Activated CD4-positive, alpha-beta T cell treated with anti-CD3 and anti-CD28 coated beads for 36 hours (primary cell): ENCODE measurements at regions of chr11 and their contacts with region 1.

Region 1: GRCh38 chr11:62591448-62592145 is at the start of gene TUT1:
- DNase-seq: peak; percentile 97
- ATAC-seq: peak; percentile 93
- H3K4me3 Mint-ChIP-seq: peak within 1 kb of the TSS; percentile 99
- H3K27ac Mint-ChIP-seq: peak within 1 kb of the TSS; percentile 99
- H3K4me1 Mint-ChIP-seq: peaks cover 47% of the 10 kb centered on the region
- H3K27me3 Mint-ChIP-seq: no peaks in the 10 kb centered on the region
- total RNA-seq, gene TUT1: 32.5 to 36.0 TPM

Region 2: DNA sequence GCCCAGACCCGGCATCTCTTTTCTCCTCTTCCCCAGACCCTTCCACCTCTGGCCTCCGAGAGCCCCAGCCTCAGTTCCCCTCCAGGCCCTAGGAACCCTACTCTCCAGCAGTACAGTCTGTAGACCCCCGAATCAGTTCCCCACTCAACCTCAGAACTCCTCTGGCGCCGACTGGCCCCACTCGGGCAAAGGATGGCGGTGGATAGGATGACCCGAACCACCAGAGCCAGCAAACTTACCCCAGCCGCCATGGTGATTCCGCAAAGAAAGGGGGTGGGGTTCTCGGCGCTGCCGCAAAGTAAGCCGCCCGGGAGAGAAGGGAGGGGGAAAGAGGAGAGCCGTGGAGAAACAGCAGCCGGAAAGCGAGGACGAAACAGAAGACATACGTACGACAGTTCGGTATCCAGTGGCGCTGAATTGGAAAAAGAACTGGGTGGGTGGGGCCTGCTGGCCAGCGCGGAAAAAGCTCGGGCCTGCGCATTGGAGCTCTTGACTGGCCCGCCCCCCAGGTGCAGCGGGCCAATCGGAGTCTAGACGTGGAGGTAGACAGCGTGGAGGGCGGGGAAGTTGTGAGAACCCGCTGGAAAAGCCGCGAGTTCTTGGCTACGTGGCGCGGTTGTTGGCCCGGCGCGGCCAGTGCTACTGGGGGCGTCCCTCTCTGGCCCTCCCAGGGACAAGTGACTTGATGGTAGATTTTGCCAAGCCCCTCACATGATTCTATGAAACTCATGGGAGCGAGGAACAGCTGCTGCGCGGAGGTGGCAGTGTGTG is 17.8 kb before region 1 on chr11 and contains the start of gene EEF1G:
- CTCF ChIA-PET with region 1: interaction called, 13 read pairs
- POLR2A ChIA-PET with region 1: interaction called, 59 read pairs
- intact Hi-C with region 1: loop called (anchors 1 kb)
- DNase-seq: peak; percentile 99
- ATAC-seq: peak; percentile 97
- H3K4me3 Mint-ChIP-seq: peak within 1 kb of the TSS; percentile 93
- H3K27ac Mint-ChIP-seq: peak within 1 kb of the TSS; percentile 97
- H3K4me1 Mint-ChIP-seq: peaks cover 43% of the 10 kb centered on the region
- H3K27me3 Mint-ChIP-seq: no peaks in the 10 kb centered on the region
- total RNA-seq, gene EEF1G: 1,986 to 2,351 TPM

Region 3: GRCh38 chr11:62652161-62653006 is 60.8 kb after region 1 on chr11:
- CTCF ChIA-PET with region 1: interaction called, 4 read pairs
- POLR2A ChIA-PET with region 1: interaction called, 20 read pairs
- intact Hi-C with region 1: loop called (anchors 1 to 2 kb)
- DNase-seq: no peak
- ATAC-seq: no peak
- H3K4me3 Mint-ChIP-seq: peak overlapping the region; percentile 88
- H3K27ac Mint-ChIP-seq: peak overlapping the region; percentile 91
- H3K4me1 Mint-ChIP-seq: peaks cover 23% of the 10 kb centered on the region
- H3K27me3 Mint-ChIP-seq: no peaks in the 10 kb centered on the region

Region 4: GRCh38 chr11:62694455-62695167 is 103.0 kb after region 1 on chr11:
- CTCF ChIA-PET with region 1: interaction called, 10 read pairs
- POLR2A ChIA-PET with region 1: interaction called, 9 read pairs
- intact Hi-C with region 1: loop called (anchors 1 to 5 kb)
- DNase-seq: peak; percentile 86
- ATAC-seq: peak; percentile 95
- H3K4me3 Mint-ChIP-seq: no peak overlapping the region
- H3K27ac Mint-ChIP-seq: no peak overlapping the region
- H3K4me1 Mint-ChIP-seq: peaks cover 5% of the 10 kb centered on the region
- H3K27me3 Mint-ChIP-seq: no peaks in the 10 kb centered on the region

Region 5: GRCh38 chr11:62771144-62772021 is 179.8 kb after region 1 on chr11 and contains the start of gene TAF6L:
- CTCF ChIA-PET with region 1: no interaction called
- POLR2A ChIA-PET with region 1: interaction called, 3 read pairs
- intact Hi-C with region 1: loop called in 1 of 2 experiments (anchors 1 kb)
- DNase-seq: peak; percentile 98
- ATAC-seq: peak; percentile 87
- H3K4me3 Mint-ChIP-seq: peak within 1 kb of the TSS; percentile 85
- H3K27ac Mint-ChIP-seq: peak within 1 kb of the TSS; percentile 89
- H3K4me1 Mint-ChIP-seq: peaks cover 26% of the 10 kb centered on the region
- H3K27me3 Mint-ChIP-seq: no peaks in the 10 kb centered on the region
- total RNA-seq, gene TAF6L: 10.2 to 12.6 TPM

Region 6: DNA sequence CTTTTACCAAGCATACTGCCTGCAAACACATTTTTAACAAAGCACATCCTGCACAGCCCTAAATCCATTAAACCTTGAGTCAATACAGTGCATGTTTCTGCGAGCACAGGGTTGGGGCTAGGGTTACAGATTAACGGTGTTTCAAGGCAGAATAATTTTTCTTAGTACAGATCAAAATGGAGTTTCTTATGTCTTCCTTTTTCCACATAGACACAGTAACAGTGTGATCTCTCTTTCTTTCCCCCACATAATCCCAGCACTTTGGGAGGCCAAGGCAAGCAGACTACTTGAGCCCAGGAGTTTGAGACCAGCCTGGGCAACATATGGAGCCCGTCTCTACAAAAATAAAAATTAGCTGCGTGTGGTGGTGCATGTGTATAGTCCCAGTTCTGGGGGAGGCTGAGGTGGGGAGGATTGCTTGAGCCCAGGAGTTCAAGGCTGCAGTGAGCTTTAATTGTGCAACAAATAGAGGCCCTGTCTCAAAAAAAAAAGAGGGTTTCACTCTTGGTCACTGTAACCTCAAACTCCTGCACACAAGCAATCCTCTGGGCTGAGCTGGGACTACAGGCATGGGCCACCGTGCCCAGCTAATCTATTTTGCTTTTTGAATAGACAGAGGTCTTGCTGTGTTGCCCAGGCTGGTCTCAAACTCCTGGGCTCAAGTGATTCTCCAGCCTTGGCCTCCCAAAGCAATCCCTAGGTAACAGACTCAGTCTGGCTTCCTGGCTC is 269.4 kb after region 1 on chr11:
- CTCF ChIA-PET with region 1: interaction called, 3 read pairs
- POLR2A ChIA-PET with region 1: interaction called, 12 read pairs
- intact Hi-C with region 1: loop called in 1 of 2 experiments (anchors 5 kb)
- DNase-seq: no peak
- ATAC-seq: peak; percentile 28
- H3K4me3 Mint-ChIP-seq: no peak overlapping the region
- H3K27ac Mint-ChIP-seq: peak overlapping the region; percentile 69
- H3K4me1 Mint-ChIP-seq: peaks cover 43% of the 10 kb centered on the region
- H3K27me3 Mint-ChIP-seq: no peaks in the 10 kb centered on the region